ENCODE measurements at regions of chr5 and their contacts with region 1.

Region 1: DNA sequence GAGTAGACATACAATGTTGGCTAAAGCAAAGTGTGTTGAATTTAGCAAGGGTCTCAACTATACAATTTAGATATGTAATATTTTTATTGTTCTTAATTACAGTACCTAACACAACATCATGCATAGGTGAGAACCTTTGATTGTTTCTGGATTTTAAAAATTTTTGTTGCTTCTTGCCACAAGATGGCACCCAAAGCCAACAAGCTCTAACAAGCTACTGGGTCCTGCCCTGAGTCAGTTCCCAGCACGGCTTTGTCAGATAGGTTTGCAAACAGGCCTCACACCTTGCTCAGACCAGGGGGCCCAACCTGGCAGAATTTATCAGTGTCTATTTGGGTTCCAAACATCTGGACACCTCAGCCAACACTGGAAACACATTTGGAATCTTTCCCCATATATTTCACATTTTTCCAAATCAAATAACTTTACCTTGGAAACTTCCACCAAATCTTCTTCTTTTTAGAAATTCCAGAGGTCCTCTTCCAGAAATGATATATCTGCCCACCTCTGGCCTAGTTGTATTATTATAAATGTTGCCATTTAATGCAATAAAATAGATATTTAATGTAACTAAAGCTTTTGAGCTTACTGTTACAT is 49.5 kb upstream of the EGFLAM start:
- DNase-seq: peak; percentile 47
- ATAC-seq: peak; percentile 78
- H3K4me3 ChIP-seq: no peak overlapping the region
- H3K27ac ChIP-seq: no peak overlapping the region
- H3K4me1 ChIP-seq: peaks cover 0 to 3% of the 10 kb centered on the region in 2 experiments; a peak in 1 of 4 replicates
- H3K27me3 ChIP-seq: no peaks in the 10 kb centered on the region
- CTCF ChIP-seq: peak; percentile 57 to 69 (median 59); a peak in 4 of 6 replicates
- POLR2A ChIP-seq: no peak
- RAD21 ChIP-seq: peak; percentile 87

Region 2: GRCh38 chr5:38404667-38405276 is 195.9 kb after region 1 on chr5:
- CTCF ChIA-PET with region 1: interaction called, 5 read pairs
- POLR2A ChIA-PET with region 1: no interaction called
- RAD21 ChIA-PET with region 1: no interaction called
- intact Hi-C with region 1: loop called (anchors 1 kb)
- DNase-seq: peak; percentile 37
- ATAC-seq: peak; percentile 84
- H3K4me3 ChIP-seq: no peak overlapping the region
- H3K27ac ChIP-seq: no peak overlapping the region
- H3K4me1 ChIP-seq: no peaks in the 10 kb centered on the region
- H3K27me3 ChIP-seq: peaks cover 17% of the 10 kb centered on the region; the same call in 1 of the 2 replicates
- CTCF ChIP-seq: peak; percentile 61 to 63 (median 62); a peak in 5 of 6 replicates
- POLR2A ChIP-seq: no peak
- RAD21 ChIP-seq: peak; percentile 71

Region 3: DNA sequence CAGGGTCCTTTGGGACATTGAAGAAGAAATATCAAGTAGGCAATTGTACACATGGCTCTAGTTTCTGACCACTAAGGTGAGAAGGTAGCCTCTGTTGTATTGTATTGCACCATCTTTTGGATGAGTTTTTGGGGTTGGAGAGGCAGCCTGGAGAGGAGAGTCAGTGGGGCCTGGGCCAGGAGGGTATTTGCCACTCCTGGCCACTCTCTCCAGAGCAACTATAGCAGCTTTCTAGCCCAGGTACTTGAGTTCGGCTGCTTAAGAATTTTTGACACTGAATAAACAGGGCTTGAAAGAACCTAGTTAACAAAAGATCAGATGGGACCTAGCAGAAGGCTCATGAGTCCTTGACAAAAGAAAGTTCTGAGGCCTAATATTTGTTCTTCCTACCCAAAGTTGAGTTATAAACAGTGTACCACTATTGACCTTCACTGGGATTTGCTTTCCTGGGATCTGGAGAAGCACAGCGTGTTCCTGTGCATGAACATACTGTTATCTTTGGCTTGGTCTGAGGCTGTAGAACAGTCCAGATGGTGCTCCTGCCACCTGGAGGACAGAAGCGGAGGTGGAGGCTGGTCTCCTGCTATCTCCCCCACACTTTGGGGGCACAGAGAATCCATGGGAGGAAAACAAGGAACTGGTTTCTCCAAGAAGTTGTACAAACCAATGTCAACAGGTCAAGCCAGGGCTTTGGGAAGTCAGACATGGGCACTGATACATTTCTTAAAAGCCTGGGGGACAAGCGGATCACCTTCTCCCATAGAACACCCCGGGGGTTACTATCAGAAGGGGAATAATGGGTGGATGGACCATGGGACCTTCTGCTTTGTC is 458.0 kb after region 1 on chr5:
- CTCF ChIA-PET with region 1: no interaction called
- POLR2A ChIA-PET with region 1: no interaction called
- RAD21 ChIA-PET with region 1: no interaction called
- intact Hi-C with region 1: loop called (anchors 5 kb)
- DNase-seq: peak; percentile 19
- ATAC-seq: peak; percentile 97
- H3K4me3 ChIP-seq: no peak overlapping the region
- H3K27ac ChIP-seq: no peak overlapping the region
- H3K4me1 ChIP-seq: no peaks in the 10 kb centered on the region
- H3K27me3 ChIP-seq: no peaks in the 10 kb centered on the region
- CTCF ChIP-seq: peak; percentile 67 to 80 (median 75); a peak in 5 of 6 replicates
- POLR2A ChIP-seq: no peak
- RAD21 ChIP-seq: peak; percentile 90